ENCODE measurements at regions of chr13 and their contacts with region 1.

Region 1: GRCh38 chr13:85828149-85828548 is 28.9 kb upstream of the SLITRK6 start:
- DNase-seq: no peak
- H3K4me3 ChIP-seq: no peak overlapping the region
- CTCF ChIP-seq: peak; percentile 51

Region 2: DNA sequence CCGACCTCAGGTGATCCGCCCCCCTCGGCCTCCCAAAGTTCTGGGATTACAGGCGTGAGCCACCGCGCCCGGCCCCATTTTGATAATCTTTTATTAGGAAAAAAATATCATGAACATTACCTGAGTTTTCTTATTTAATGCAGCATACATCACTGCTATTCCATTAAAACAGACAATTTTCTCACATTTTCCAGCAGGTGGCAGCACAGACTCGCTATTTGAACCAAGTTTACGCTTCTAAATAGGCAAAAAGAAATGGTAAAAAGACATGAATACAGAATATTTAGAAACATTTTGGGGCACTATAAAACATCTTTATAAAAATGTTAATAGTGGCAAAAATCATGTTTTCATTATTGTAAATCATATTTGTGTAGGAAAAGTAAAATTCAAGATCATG is 932.0 kb before region 1 on chr13:
- CTCF ChIA-PET with region 1: interaction called, 13 read pairs
- POLR2A ChIA-PET with region 1: no interaction called
- DNase-seq: peak; percentile 5
- H3K4me3 ChIP-seq: no peak overlapping the region
- CTCF ChIP-seq: peak; percentile 40

Region 3: DNA sequence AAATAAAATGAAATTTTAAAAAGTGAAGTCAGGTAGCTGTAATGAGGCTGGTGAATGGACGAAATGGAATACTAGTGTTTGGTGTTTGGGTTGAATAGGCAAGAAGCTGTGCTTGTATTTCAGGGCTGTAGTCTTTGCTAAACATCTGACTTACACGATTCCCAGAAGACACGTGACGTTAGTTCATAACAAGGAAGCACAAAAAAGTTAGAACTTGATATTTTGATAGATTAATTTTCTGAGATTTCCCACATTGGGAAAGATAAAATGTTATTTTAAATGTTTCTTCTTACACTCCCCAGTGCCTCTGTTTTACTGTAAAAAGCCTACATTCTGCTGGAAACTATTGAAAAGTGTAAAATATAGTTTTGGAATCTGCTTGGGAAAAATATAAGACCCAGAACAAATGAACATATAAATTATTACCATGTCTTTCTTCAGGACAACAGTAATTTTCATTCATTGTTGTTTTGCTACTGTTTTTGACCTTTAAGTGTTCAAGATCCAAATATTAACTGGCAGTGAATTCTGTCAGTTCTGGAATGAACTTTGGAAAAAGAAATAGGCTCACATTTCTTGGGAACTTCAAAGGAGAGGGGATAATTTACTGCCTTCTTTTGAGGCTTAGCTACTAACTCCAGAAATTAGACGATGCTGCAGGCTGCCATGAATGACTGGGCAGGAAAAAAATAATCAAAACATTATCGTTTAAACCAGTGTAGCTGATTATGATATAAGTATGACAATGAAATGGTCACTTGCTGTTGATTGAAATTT is 270.3 kb before region 1 on chr13:
- CTCF ChIA-PET with region 1: no interaction called
- POLR2A ChIA-PET with region 1: no interaction called
- DNase-seq: no peak
- H3K4me3 ChIP-seq: no peak overlapping the region
- CTCF ChIP-seq: no peak

Region 4: DNA sequence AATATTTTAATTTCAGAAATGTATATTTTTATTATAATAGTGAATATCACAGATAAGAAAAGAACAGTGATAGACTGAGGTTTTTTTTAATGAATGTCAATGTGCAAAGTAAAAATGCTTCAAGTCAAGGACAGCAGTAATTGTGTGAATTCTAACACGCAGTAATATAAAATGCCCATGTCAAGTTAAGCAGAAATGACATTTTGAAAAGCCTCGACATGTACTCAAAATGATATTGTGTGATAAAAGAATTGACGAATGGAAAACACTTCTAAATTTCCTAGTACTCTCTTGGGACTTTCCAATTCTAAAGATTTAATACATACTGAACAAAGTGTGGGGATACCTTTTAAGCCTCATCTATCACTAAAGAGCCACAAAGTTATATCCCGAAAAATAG is 201.5 kb before region 1 on chr13:
- CTCF ChIA-PET with region 1: no interaction called
- POLR2A ChIA-PET with region 1: no interaction called
- DNase-seq: no peak
- H3K4me3 ChIP-seq: no peak overlapping the region
- CTCF ChIP-seq: no peak

Region 5: DNA sequence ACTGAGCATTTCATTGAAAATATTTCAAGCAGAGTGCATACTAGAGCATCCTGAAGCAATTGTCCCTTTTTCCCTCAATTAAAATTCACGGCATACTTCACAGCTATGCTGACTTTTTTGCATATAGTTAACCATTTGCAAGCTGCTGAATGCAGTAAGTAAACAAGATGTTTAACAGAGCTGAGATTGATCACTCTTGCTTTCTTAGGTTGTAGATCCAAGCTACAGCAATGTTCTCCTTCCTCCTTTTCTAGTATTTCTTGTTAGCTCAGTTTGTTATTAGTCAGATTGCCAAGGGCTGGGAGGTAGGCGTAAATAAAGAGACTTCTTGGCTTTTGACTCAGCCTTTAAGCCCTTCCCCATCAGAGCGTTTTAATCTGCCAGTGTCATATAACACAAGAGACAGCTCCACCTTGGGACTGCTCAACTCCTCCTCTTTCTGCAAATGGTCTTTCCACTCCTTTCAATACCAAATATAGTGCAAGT is 29.0 kb before region 1 on chr13 and contains the start of gene SLITRK6:
- CTCF ChIA-PET with region 1: no interaction called
- POLR2A ChIA-PET with region 1: no interaction called
- DNase-seq: peak; percentile 7
- H3K4me3 ChIP-seq: no peak within 1 kb of the TSS
- CTCF ChIP-seq: no peak

Region 6: GRCh38 chr13:85847012-85847411 is 18.9 kb after region 1 on chr13:
- CTCF ChIA-PET with region 1: no interaction called
- POLR2A ChIA-PET with region 1: no interaction called
- DNase-seq: no peak
- H3K4me3 ChIP-seq: no peak overlapping the region
- CTCF ChIP-seq: no peak

Measured in AG04449 (cell line).